Thyroid gland (tissue), 4 donors: ENCODE measurements at regions of chr3 and their contacts with region 1.

Region 1: GRCh38 chr3:184289426-184289938 is 9.6 kb upstream of the PSMD2 start:
- DNase-seq: peak; percentile 44 to 49
- H3K4me3 ChIP-seq: no peak overlapping the region
- H3K27ac ChIP-seq: no peak overlapping the region
- H3K4me1 ChIP-seq: no peaks in the 10 kb centered on the region
- H3K27me3 ChIP-seq: no peaks in the 10 kb centered on the region
- CTCF ChIP-seq: peak in 4 of 6 experiments; percentile 41 to 67 (median 54)
- POLR2A ChIP-seq: no peak

Region 2: GRCh38 chr3:184229394-184230080 is 59.9 kb before region 1 on chr3 and contains the start of gene VWA5B2:
- intact Hi-C with region 1: loop called (anchors 10 kb)
- DNase-seq: peak; percentile 76
- H3K4me3 ChIP-seq: peak within 1 kb of the TSS in 2 of 3 donors; percentile 30 to 39
- H3K27ac ChIP-seq: no peak within 1 kb of the TSS
- H3K4me1 ChIP-seq: peaks cover 9 to 29% of the 10 kb centered on the region in 2 donors
- H3K27me3 ChIP-seq: peaks cover 6% of the 10 kb centered on the region
- CTCF ChIP-seq: peak in 4 of 6 experiments; percentile 21 to 60 (median 52)
- POLR2A ChIP-seq: peak in 1 of 2 donors; percentile 52
- total RNA-seq, gene VWA5B2: 0.42 to 0.88 (median 0.45) TPM in 3 of 4 donors, not detected in the other